SK-N-SH (cell line): ENCODE measurements at regions of chr1 and their contacts with region 1.

Region 1: DNA sequence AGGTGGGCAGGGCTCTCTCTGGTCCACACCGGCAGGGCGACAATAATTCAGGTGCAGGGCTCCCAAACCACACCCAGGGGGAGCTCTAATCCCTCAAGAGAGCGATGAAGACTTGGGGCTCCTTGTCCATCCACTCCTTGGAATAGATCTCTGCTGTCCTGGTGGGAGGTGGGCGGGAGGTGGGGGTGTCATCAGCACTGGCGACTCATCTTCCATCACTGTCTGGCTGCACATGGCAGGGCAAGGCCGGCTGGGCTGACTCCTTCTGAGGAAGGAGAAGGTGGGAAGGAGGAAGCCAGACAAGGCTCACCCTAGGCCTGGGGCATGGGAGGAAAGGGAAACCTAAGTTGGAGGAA is 29.3 kb downstream of the TNNT2 start:
- DNase-seq: peak; percentile 76
- H3K4me3 ChIP-seq: no peak overlapping the region
- H3K27ac ChIP-seq: no peak overlapping the region
- H3K4me1 ChIP-seq: peaks cover 0 to 7% of the 10 kb centered on the region in 2 experiments; a peak in 2 of 4 replicates
- H3K27me3 ChIP-seq: no peaks in the 10 kb centered on the region; the same call in 1 of the 2 replicates
- CTCF ChIP-seq: peak; percentile 65
- EP300 ChIP-seq: no peak
- RAD21 ChIP-seq: peak; percentile 58

Region 2: GRCh38 chr1:201156346-201156745 is 191.8 kb before region 1 on chr1:
- CTCF ChIA-PET with region 1: no interaction called
- POLR2A ChIA-PET with region 1: no interaction called
- DNase-seq: no peak
- H3K4me3 ChIP-seq: no peak overlapping the region
- H3K27ac ChIP-seq: no peak overlapping the region
- H3K4me1 ChIP-seq: peaks cover 11 to 16% of the 10 kb centered on the region in 2 experiments; a peak in 3 of 4 replicates
- H3K27me3 ChIP-seq: no peaks in the 10 kb centered on the region
- CTCF ChIP-seq: no peak
- EP300 ChIP-seq: no peak
- RAD21 ChIP-seq: no peak

Region 3: DNA sequence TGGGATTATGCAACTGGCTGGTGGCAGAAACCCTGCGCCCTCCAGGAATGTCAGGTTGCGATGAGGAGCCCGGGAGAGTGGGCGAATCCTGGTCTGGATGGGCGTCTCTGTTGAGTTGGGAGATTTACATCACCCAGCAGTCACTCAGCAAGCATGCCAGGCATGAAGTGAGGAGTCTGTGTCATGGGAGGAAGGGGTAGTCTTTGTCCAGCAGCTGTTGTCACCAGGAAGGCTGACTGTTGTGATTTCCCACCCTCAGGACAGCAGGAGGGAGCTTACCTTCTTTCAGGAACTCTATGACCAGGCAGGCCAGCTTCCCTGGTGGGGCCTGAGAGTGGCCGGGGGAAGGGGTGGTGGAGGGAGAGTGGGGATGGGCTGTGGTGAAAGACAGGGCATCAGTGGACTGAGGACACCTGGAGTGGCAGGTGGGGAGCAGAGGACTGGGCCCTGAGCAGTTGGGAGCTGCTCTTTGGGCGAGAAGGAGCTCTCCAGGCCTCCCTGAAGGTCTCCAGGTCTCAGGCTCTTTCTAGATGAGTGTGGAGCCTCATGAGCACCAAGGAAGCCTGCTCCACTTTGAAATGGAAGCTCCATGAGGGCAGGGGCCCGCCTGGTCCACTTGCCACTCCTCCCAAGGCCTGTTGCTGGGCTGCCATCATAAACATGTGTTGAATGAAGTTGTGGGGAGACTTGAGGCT is 86.3 kb before region 1 on chr1:
- CTCF ChIA-PET with region 1: interaction called, 28 read pairs
- POLR2A ChIA-PET with region 1: no interaction called
- DNase-seq: peak; percentile 6
- H3K4me3 ChIP-seq: no peak overlapping the region
- H3K27ac ChIP-seq: no peak overlapping the region
- H3K4me1 ChIP-seq: peaks cover 12 to 15% of the 10 kb centered on the region in 2 experiments; a peak in 3 of 4 replicates
- H3K27me3 ChIP-seq: no peaks in the 10 kb centered on the region
- CTCF ChIP-seq: no peak
- EP300 ChIP-seq: no peak
- RAD21 ChIP-seq: no peak

Region 4: DNA sequence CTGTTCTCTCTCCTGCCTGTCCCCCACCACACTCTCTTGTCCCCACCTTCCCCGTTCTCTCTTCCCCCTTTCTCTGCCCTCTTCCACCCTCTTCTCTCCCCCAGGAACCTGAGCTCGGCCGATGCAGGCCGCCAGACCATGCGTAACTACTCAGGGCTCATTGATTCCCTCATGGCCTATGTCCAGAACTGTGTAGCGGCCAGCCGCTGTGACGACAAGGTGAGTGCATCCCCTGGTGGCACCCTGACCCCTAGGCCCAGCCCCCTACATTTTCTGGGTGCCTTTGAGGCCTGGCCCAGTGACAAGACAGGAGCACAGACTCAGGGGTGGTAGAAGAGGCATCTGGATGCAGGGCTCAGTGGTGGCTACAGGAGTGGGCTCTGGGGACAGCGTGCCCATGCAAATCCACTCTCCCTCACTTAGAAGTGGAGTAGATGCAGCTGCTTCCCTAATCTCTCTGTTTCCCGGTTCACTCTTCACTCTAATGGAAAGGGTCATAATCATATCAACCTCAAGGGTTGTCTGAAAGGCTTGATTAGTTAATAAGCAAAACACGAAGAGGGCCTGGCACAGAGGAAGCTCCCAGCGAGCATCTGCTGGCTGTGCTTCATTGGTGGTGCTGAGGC is 27.9 kb before region 1 on chr1:
- CTCF ChIA-PET with region 1: interaction called, 23 read pairs
- POLR2A ChIA-PET with region 1: no interaction called
- DNase-seq: peak; percentile 77
- H3K4me3 ChIP-seq: no peak overlapping the region
- H3K27ac ChIP-seq: peak overlapping the region in 1 of 2 experiments; percentile 47; a peak in 2 of 4 replicates
- H3K4me1 ChIP-seq: peaks cover 0 to 30% of the 10 kb centered on the region in 2 experiments; a peak in 1 of 4 replicates
- H3K27me3 ChIP-seq: peaks cover 7% of the 10 kb centered on the region; the same call in 1 of the 2 replicates
- CTCF ChIP-seq: no peak
- EP300 ChIP-seq: no peak
- RAD21 ChIP-seq: 0 out of 2 replicates have a peak, but pooled peaks have one; percentile 1

Region 5: GRCh38 chr1:201334325-201335173 is 13.6 kb before region 1 on chr1:
- CTCF ChIA-PET with region 1: interaction called, 21 read pairs
- POLR2A ChIA-PET with region 1: no interaction called
- DNase-seq: no peak
- H3K4me3 ChIP-seq: no peak overlapping the region
- H3K27ac ChIP-seq: no peak overlapping the region
- H3K4me1 ChIP-seq: peaks cover 0 to 9% of the 10 kb centered on the region in 2 experiments; a peak in 2 of 4 replicates
- H3K27me3 ChIP-seq: no peaks in the 10 kb centered on the region
- CTCF ChIP-seq: no peak
- EP300 ChIP-seq: no peak
- RAD21 ChIP-seq: no peak

Region 6: GRCh38 chr1:201500670-201501120 is 152.5 kb after region 1 on chr1:
- CTCF ChIA-PET with region 1: no interaction called
- POLR2A ChIA-PET with region 1: no interaction called
- DNase-seq: no peak
- H3K4me3 ChIP-seq: no peak overlapping the region
- H3K27ac ChIP-seq: no peak overlapping the region
- H3K4me1 ChIP-seq: peaks cover 24 to 35% of the 10 kb centered on the region in 2 experiments; a peak in 3 of 4 replicates
- H3K27me3 ChIP-seq: no peaks in the 10 kb centered on the region
- CTCF ChIP-seq: no peak
- EP300 ChIP-seq: no peak
- RAD21 ChIP-seq: no peak